ENCODE measurements at regions of chr7 and their contacts with region 1.

Region 1: DNA sequence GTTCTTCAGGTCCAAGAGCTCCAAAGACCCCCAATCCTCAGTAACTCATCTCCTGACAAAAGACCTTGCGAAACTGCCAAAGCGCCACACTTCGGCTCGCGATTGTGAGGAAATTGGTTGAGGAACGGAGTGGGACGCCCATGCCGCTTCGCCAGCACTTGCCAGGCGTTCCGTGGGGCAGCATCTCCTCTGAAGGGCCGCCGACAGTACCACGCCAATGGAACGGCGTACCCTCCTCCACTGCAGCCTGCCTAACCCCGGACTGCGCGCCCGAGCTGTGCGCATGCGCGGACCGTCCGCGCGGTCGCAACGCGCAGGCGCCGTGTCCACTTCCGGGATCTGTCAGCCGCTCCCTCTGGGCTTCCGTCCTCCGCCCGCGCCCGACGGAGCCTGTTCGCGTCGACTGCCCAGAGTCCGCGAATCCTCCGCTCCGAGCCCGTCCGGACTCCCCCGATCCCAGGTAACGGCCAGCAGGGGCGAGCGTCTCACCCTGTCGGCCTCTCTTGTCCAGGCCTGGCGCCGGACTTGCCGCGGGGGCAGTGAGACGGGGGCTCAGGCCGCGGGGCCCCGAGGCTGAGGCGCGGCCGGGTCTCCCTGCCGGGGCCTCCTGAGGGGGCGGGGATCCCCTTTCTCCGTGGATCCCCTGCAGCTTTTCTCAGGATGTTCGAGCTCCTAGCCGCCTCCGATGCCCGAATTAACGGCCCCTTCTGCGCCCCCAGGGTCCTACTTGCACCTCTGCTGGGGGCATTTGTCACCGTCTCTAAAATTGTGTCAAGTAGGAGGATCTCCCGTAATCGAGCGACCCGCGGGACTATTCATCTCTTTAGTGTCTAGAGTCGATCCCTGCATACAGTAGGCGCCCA is at the start of gene ARPC1A:
- DNase-seq: peak; percentile 81
- H3K4me3 ChIP-seq: peak within 1 kb of the TSS; percentile 90 to 94
- H3K27ac ChIP-seq: peak within 1 kb of the TSS; percentile 82
- H3K4me1 ChIP-seq: peaks cover 10% of the 10 kb centered on the region
- H3K27me3 ChIP-seq: no peaks in the 10 kb centered on the region
- CTCF ChIP-seq: peak in 2 of 4 experiments; percentile 19 to 51
- POLR2A ChIP-seq: peak; percentile 84
- total RNA-seq, gene ARPC1A: 119 to 136 TPM

Region 2: DNA sequence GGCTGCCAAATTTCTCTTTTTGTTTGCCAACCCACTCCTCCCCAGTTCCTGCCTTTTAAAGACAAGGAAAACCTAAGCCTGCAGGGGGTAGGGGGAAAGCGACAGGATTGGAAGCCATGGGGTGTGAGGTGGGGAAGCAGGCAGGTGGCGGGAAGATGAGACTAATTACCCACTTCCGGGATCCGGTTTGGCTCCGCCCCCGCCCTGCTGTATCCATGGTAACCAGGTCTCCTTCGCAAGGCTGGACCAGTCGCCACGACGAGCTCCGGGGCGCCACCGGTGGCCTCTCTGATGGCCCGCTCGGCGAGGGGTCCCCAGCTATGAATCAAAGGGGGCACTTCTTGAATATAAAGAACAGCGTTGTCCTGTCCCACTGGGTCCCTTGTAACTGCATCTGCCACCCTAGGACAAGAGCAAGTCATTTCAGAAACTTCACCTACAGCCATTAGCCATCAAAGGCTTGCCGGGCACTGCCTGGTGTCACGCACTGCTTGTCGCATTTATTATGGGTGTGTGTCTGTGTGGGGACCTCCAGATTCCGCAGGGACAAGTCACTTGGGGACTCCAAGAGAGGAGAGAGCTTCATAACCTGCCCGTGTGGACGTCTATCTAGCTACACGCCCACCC is 1274.5 kb before region 1 on chr7:
- intact Hi-C with region 1: no loop called
- DNase-seq: no peak
- H3K4me3 ChIP-seq: no peak overlapping the region
- H3K27ac ChIP-seq: no peak overlapping the region
- H3K4me1 ChIP-seq: no peaks in the 10 kb centered on the region
- H3K27me3 ChIP-seq: no peaks in the 10 kb centered on the region
- CTCF ChIP-seq: no peak
- POLR2A ChIP-seq: no peak

Region 3: GRCh38 chr7:99392677-99393354 is 67.0 kb after region 1 on chr7:
- intact Hi-C with region 1: loop called (anchors 10 kb)
- DNase-seq: peak; percentile 69
- H3K4me3 ChIP-seq: peak overlapping the region; percentile 42 to 47
- H3K27ac ChIP-seq: peak overlapping the region; percentile 66 to 68
- H3K4me1 ChIP-seq: peaks cover 5% of the 10 kb centered on the region
- H3K27me3 ChIP-seq: no peaks in the 10 kb centered on the region
- CTCF ChIP-seq: no peak
- POLR2A ChIP-seq: peak; percentile 42

Measured in prostate gland (tissue), 2 donors.